ENCODE measurements at regions of chr13 and their contacts with region 1.

Region 1: GRCh38 chr13:26707122-26708006 is 53.2 kb downstream of the GPR12 start:
- DNase-seq: peak; percentile 14 to 51
- ATAC-seq: peak; percentile 91 to 93
- H3K4me3 ChIP-seq: no peak overlapping the region
- H3K27ac ChIP-seq: no peak overlapping the region
- H3K4me1 ChIP-seq: no peaks in the 10 kb centered on the region
- CTCF ChIP-seq: peak; percentile 37
- EP300 ChIP-seq: no peak
- POLR2A ChIP-seq: no peak
- RAD21 ChIP-seq: peak; percentile 48 to 67; a peak in 4 of 5 replicates

Region 2: DNA sequence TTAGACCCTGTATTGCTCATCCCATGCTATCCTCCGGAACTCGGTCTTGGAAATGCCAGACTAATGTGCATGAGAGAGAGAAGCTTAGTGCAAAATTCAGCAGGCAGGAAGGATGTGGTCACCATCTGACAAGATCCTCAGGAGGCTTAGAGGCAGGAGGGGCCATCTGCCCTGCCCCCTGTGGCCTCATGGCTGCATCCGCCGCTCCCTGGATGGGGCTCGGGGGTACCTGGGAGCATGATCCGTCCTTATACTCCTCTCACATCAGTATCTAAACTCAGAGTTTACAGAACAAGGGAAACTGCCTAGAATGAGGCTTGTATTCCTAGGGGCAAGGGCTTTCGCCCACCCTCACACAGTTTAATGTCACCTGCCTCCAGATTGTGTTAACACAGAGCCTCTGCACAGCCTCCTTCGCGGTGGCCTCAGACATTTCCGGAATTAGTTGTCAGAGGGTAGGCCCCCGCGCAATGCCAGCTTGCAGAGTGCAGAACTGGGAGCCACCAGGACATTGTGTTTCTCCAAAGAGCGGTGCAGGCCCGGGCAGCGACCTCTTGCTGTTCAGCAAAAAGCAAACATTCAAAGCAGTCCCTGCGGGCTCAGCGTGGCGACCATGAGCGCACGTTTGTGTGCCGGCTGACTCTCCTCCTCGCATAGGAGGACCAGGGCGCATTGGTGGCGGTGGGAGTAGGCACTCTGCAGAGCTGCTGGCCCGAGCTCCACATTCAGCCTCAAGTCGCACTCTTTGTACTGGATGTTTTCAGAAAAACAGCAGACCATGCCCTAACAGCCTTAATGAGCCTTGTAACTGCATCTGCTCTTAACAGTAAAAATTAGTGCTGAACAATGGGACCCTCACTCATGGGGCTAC is 14.1 kb after region 1 on chr13:
- CTCF ChIA-PET with region 1: interaction called, 15 read pairs
- POLR2A ChIA-PET with region 1: no interaction called
- DNase-seq: peak in 1 of 2 experiments; percentile 1
- ATAC-seq: no peak; a peak in 1 of 6 replicates
- H3K4me3 ChIP-seq: no peak overlapping the region
- H3K27ac ChIP-seq: no peak overlapping the region
- H3K4me1 ChIP-seq: no peaks in the 10 kb centered on the region
- CTCF ChIP-seq: no peak
- EP300 ChIP-seq: no peak
- POLR2A ChIP-seq: no peak
- RAD21 ChIP-seq: no peak

Region 3: GRCh38 chr13:26813321-26813979 is 106.1 kb after region 1 on chr13:
- CTCF ChIA-PET with region 1: no interaction called
- POLR2A ChIA-PET with region 1: no interaction called
- DNase-seq: no peak
- ATAC-seq: no peak
- H3K4me3 ChIP-seq: no peak overlapping the region
- H3K27ac ChIP-seq: no peak overlapping the region
- H3K4me1 ChIP-seq: no peaks in the 10 kb centered on the region
- CTCF ChIP-seq: no peak
- EP300 ChIP-seq: no peak
- POLR2A ChIP-seq: no peak
- RAD21 ChIP-seq: no peak

Region 4: DNA sequence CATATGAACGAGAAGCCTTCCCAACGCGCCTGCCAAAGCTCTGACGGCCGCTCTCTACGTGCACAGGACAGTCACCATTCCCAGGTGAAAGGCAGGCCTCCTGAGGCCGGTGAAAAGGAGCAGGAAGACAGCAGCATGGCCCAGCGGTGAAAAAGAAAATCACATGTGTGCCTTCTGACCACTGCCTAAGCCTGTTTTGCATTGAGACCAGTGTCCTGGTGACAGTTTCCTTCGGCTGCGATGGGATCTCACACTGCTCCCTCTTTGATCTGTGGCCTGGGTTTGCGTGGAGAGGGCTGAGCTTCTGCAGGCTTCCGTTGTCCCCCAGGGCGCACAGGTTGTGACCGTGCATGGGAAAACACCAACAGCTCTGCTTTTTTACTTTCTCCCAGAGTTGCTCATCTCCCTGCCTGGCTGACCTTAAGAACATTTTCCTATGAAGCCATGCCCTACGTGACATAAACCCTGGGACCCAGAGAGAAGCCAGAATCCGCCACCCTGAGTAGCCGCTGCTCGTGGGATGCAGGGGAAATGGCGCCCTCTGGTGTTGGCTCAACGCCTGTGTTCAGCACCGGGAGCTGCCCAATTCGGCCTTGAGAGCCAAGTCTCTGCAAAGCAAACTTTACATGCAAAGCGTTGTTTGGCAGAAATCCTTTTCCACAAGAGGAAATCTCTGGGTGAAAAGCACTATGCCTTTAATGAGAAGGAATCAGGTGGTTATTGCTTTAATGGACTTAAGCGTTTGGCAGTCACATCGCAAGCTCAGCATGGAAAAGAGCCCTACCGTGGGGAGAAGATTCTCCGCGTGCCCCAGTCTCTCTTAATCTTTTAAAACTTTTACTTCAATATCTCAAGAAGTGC is 165.4 kb after region 1 on chr13:
- CTCF ChIA-PET with region 1: interaction called, 13 read pairs
- POLR2A ChIA-PET with region 1: no interaction called
- DNase-seq: peak; percentile 8 to 36
- ATAC-seq: peak; percentile 56 to 86; a peak in 4 of 6 replicates
- H3K4me3 ChIP-seq: no peak overlapping the region
- H3K27ac ChIP-seq: no peak overlapping the region
- H3K4me1 ChIP-seq: no peaks in the 10 kb centered on the region
- CTCF ChIP-seq: peak; percentile 40; the same call in 2 of the 3 replicates
- EP300 ChIP-seq: no peak
- POLR2A ChIP-seq: no peak
- RAD21 ChIP-seq: peak in 1 of 2 experiments; percentile 65; a peak in 2 of 5 replicates